Breast epithelium (tissue), 4 donors: ENCODE measurements at regions of chr2 and their contacts with region 1.

Region 1: DNA sequence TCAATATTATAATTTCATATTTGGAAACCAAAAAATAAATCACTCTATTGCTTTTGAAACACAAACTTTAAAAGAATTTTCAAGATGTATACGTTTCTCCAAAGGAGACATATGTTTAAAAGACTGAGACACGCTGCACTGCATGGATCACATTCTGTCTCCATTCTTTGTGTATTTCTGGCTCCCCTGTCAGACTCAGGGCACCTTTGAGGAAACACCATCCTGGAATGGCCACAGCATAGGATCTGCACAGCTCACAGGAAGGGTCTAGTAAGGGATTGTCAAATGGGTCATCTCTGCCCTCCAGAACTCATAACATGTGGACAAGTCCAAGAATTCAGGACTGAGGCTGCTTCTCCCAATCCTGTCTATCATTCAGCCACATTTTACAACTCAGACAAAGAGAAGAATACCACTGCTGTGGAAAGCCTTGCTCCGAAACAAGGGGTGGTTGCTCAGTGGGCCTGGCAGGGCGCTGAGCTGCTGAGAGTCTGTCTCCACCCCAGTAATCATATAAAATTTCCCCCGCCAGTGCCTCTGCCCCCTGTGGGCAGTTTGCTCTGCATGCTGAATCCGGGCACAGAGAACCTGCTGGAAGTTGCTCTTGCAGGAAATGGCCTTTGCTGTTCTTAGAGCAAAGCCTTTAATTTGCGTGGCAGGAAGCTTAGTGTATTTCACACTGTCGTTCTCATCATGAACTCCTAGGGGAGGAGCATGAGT is 85.3 kb upstream of the KLHL29 start:
- DNase-seq: no peak
- H3K4me3 ChIP-seq: no peak overlapping the region
- H3K27ac ChIP-seq: no peak overlapping the region
- H3K4me1 ChIP-seq: no peaks in the 10 kb centered on the region
- H3K27me3 ChIP-seq: no peaks in the 10 kb centered on the region
- CTCF ChIP-seq: no peak
- POLR2A ChIP-seq: no peak

Region 2: GRCh38 chr2:23235292-23235691 is 64.3 kb before region 1 on chr2:
- intact Hi-C with region 1: no loop called
- DNase-seq: no peak
- H3K4me3 ChIP-seq: no peak overlapping the region
- H3K27ac ChIP-seq: no peak overlapping the region
- H3K4me1 ChIP-seq: no peaks in the 10 kb centered on the region
- H3K27me3 ChIP-seq: no peaks in the 10 kb centered on the region
- CTCF ChIP-seq: no peak
- POLR2A ChIP-seq: no peak

Region 3: DNA sequence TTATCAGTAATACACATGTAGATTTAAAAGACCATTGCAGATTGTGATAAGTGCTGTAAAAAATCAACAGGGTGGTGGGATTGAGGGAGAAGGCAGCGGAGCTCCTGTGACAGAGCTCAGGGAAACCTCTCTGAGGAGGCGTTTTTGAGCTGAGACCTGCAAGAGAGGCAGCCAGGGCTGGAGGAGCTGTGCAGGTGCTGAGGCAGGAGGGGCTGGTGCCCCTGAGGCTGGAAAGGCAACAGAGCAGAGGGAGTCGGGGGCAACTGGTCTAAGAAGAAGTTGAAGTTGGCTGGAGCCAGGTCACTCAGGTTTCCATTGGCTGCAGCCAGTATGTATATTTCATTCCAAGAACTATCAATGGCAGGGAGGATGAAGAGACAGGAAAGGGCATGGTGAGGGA is 132.9 kb after region 1 on chr2:
- intact Hi-C with region 1: loop called (anchors 2 kb)
- DNase-seq: peak in 1 of 2 donors; percentile 0
- H3K4me3 ChIP-seq: no peak overlapping the region
- H3K27ac ChIP-seq: no peak overlapping the region
- H3K4me1 ChIP-seq: no peaks in the 10 kb centered on the region
- H3K27me3 ChIP-seq: no peaks in the 10 kb centered on the region
- CTCF ChIP-seq: no peak
- POLR2A ChIP-seq: no peak

Region 4: DNA sequence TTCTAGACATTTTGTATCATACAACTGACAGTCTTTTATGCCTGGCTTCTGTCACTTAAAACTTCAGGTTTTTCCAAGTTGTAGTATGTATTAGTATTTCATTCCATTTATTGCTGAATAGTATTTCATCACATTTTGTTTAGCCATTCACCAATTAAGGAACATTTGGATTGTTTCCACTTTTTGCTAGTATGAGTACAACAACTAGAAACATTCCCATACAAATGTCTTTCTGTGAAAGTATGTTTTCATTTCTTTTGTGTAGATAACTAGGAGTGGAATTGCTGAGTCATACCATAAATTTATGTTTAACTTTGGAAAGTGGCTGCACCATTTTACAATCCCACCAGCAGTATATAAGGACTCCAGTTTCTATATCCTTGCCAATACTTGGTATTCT is 491.4 kb after region 1 on chr2:
- intact Hi-C with region 1: no loop called
- DNase-seq: no peak
- H3K4me3 ChIP-seq: no peak overlapping the region
- H3K27ac ChIP-seq: no peak overlapping the region
- H3K4me1 ChIP-seq: no peaks in the 10 kb centered on the region
- H3K27me3 ChIP-seq: no peaks in the 10 kb centered on the region
- CTCF ChIP-seq: no peak
- POLR2A ChIP-seq: no peak